ENCODE measurements at regions of chr11 and their contacts with region 1.

Region 1: GRCh38 chr11:106552694-106553203 is 465.5 kb downstream of the GUCY1A2 start:
- DNase-seq: no peak
- H3K27ac ChIP-seq: no peak overlapping the region
- CTCF ChIP-seq: no peak

Region 2: GRCh38 chr11:106399076-106399511 is 153.7 kb before region 1 on chr11:
- CTCF ChIA-PET with region 1: no interaction called
- POLR2A ChIA-PET with region 1: no interaction called
- DNase-seq: peak; percentile 96
- H3K27ac ChIP-seq: peak overlapping the region; percentile 93
- CTCF ChIP-seq: no peak

Region 3: DNA sequence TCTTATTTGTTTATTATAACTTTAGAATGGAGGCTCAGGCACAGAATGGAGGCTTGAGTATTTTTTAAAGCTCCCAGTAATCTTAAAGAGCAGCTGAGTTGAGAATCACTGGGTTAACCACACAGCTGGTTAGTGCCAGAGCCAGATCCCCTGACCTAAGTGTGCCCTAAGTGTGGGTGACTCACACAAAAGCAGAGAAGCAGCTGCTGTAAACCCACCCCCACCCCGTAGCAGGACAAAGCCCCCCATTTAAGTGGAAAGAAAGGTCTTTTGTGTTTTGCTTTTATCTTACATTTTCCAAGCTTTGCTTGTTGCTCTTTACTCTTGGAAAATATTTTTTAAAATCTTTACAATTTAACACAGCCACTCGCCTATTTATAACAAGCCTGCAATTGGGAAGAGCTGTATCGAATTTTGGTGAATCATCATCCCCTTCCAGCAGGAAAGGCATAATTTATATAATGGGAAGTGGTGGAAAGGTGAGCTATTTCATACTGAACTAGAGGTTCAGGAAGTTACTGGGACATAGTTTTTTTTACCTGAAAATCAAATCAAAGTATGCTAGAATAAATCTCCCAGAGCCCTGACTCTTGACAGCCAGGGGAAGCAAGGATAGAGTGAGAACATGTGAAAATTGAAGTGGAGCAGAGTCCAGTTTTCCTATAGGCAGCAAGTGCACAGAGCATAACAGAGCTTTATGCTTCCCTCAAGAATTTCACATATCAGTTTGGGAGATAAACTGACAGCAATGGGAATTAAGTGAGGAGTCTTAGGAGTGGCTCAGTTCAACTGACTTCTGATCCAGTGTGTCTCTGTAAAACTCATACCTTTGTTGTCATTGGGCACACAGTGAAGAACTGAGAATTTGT is 69.6 kb before region 1 on chr11:
- CTCF ChIA-PET with region 1: no interaction called
- POLR2A ChIA-PET with region 1: no interaction called
- DNase-seq: peak; percentile 46
- H3K27ac ChIP-seq: peak overlapping the region; percentile 67
- CTCF ChIP-seq: no peak

Region 4: DNA sequence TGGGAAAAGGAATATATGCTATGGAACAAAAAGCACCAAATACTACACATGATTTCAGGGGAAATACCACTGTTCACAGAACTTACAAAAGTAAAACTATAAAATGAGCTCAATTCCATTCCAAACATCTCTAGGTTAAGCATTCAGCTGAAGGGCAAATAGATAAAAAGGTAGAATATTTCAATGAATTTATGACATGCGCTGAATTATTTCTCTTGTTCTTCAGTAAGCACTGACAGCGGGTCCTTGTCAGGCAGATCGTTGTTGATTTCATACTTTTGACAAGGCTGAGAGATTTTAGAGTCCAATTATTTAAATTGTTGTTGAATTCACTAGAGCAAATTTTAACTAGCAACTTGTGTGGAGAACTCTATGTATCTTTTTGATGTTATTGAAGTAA is 15.9 kb after region 1 on chr11:
- CTCF ChIA-PET with region 1: no interaction called
- POLR2A ChIA-PET with region 1: no interaction called
- DNase-seq: no peak
- H3K27ac ChIP-seq: no peak overlapping the region
- CTCF ChIP-seq: no peak

Region 5: DNA sequence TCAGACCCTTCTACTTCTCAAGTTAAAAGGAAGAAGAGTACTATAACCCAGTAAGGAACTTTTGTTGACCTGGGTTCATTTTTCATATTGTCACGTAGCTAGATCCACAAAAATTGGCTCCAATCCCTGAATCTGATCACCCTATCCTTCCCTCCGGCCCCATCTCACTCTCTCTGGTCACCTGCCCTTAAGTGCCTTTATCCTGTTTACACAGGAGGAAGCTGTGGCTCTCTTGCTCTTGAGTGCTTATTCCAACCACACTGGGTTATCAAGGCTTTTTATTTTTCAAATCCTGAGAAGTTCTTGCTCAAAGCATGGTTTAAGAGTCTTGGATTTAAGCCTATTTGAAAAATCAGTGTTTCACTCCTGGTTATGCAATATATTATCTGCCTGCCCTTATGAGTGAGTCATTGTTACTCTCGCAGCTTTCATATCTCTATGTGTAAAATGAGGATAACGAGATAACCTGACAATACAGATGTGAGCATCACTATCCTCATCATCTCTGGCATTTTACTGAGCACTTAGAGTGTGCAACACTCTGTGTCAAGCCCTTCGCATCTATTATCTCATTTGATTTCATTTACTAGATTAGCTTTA is 171.6 kb after region 1 on chr11:
- CTCF ChIA-PET with region 1: interaction called, 10 read pairs
- POLR2A ChIA-PET with region 1: no interaction called
- DNase-seq: no peak
- H3K27ac ChIP-seq: no peak overlapping the region
- CTCF ChIP-seq: no peak